ENCODE measurements at regions of chr3 and their contacts with region 1.

Region 1: GRCh38 chr3:98540346-98540745 is 8.6 kb downstream of the GPR15 start:
- DNase-seq: no peak
- H3K4me3 ChIP-seq: no peak overlapping the region
- H3K4me3 Mint-ChIP-seq: peak overlapping the region; percentile 18 to 78 (median 43)
- H3K27ac ChIP-seq: no peak overlapping the region
- H3K27ac Mint-ChIP-seq: peak overlapping the region; percentile 19 to 88 (median 68)
- H3K4me1 ChIP-seq: peaks cover 22% of the 10 kb centered on the region
- H3K4me1 Mint-ChIP-seq: peaks cover 15 to 24% (median 20%) of the 10 kb centered on the region in 4 donors
- H3K27me3 ChIP-seq: no peaks in the 10 kb centered on the region
- H3K27me3 Mint-ChIP-seq: no peaks in the 10 kb centered on the region

Region 2: GRCh38 chr3:97439373-97439772 is 1101.0 kb before region 1 on chr3:
- CTCF ChIA-PET with region 1: no interaction called
- POLR2A ChIA-PET with region 1: no interaction called
- intact Hi-C with region 1: no loop called
- DNase-seq: no peak
- H3K4me3 ChIP-seq: no peak overlapping the region
- H3K4me3 Mint-ChIP-seq: no peak overlapping the region
- H3K27ac ChIP-seq: no peak overlapping the region
- H3K27ac Mint-ChIP-seq: no peak overlapping the region
- H3K4me1 ChIP-seq: no peaks in the 10 kb centered on the region
- H3K4me1 Mint-ChIP-seq: no peaks in the 10 kb centered on the region
- H3K27me3 ChIP-seq: no peaks in the 10 kb centered on the region
- H3K27me3 Mint-ChIP-seq: no peaks in the 10 kb centered on the region

Region 3: DNA sequence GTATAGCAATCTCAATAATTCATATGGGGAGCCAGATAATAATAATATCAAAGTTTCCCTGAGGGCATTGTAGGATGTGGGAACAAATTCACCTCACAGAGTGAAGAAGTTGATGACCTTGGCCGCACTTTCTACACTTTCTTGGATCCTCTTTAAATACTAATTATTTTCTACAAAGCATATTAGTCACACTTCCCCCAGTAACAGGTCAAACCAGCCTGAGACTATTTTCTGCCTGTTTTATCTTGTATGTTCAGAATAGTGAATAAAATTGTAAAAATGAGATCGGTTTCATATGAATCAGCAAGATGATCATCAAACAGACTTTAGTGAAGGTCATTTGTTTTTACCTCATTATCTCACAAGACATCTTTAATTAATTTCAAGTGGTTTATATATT is 152.2 kb before region 1 on chr3:
- CTCF ChIA-PET with region 1: no interaction called
- POLR2A ChIA-PET with region 1: no interaction called
- intact Hi-C with region 1: no loop called
- DNase-seq: no peak
- H3K4me3 ChIP-seq: no peak overlapping the region
- H3K4me3 Mint-ChIP-seq: no peak overlapping the region
- H3K27ac ChIP-seq: no peak overlapping the region
- H3K27ac Mint-ChIP-seq: no peak overlapping the region
- H3K4me1 ChIP-seq: no peaks in the 10 kb centered on the region
- H3K4me1 Mint-ChIP-seq: no peaks in the 10 kb centered on the region
- H3K27me3 ChIP-seq: no peaks in the 10 kb centered on the region
- H3K27me3 Mint-ChIP-seq: peaks cover 9 to 11% of the 10 kb centered on the region in 2 donors

Region 4: GRCh38 chr3:98556164-98557130 is 16.1 kb after region 1 on chr3:
- CTCF ChIA-PET with region 1: interaction called, 7 read pairs
- POLR2A ChIA-PET with region 1: interaction called, 163 read pairs
- intact Hi-C with region 1: loop called (anchors 1 kb)
- DNase-seq: peak; percentile 43 to 90 (median 54)
- H3K4me3 ChIP-seq: peak overlapping the region in 1 of 2 donors; percentile 0
- H3K4me3 Mint-ChIP-seq: peak overlapping the region; percentile 72 to 89 (median 80)
- H3K27ac ChIP-seq: peak overlapping the region; percentile 73
- H3K27ac Mint-ChIP-seq: peak overlapping the region; percentile 94 to 99 (median 97)
- H3K4me1 ChIP-seq: peaks cover 86% of the 10 kb centered on the region
- H3K4me1 Mint-ChIP-seq: peaks cover 56 to 89% (median 76%) of the 10 kb centered on the region in 4 donors
- H3K27me3 ChIP-seq: no peaks in the 10 kb centered on the region
- H3K27me3 Mint-ChIP-seq: no peaks in the 10 kb centered on the region

Region 5: GRCh38 chr3:98563661-98564281 is 23.4 kb after region 1 on chr3:
- CTCF ChIA-PET with region 1: interaction called, 4 read pairs
- POLR2A ChIA-PET with region 1: interaction called, 163 read pairs
- intact Hi-C with region 1: no loop called
- DNase-seq: peak; percentile 66 to 86 (median 80)
- H3K4me3 ChIP-seq: no peak overlapping the region
- H3K4me3 Mint-ChIP-seq: peak overlapping the region; percentile 45 to 87 (median 82)
- H3K27ac ChIP-seq: peak overlapping the region; percentile 92
- H3K27ac Mint-ChIP-seq: peak overlapping the region; percentile 91 to 99 (median 98)
- H3K4me1 ChIP-seq: peaks cover 86% of the 10 kb centered on the region
- H3K4me1 Mint-ChIP-seq: peaks cover 55 to 87% (median 75%) of the 10 kb centered on the region in 4 donors
- H3K27me3 ChIP-seq: no peaks in the 10 kb centered on the region
- H3K27me3 Mint-ChIP-seq: no peaks in the 10 kb centered on the region